ENCODE measurements at regions of chr14 and their contacts with region 1.

Region 1: GRCh38 chr14:105760691-105761346 is 234.4 kb downstream of the TMEM121 start:
- DNase-seq: peak in 1 of 2 donors; percentile 70
- H3K4me3 ChIP-seq: no peak overlapping the region
- CTCF ChIP-seq: no peak
- POLR2A ChIP-seq: no peak

Region 2: DNA sequence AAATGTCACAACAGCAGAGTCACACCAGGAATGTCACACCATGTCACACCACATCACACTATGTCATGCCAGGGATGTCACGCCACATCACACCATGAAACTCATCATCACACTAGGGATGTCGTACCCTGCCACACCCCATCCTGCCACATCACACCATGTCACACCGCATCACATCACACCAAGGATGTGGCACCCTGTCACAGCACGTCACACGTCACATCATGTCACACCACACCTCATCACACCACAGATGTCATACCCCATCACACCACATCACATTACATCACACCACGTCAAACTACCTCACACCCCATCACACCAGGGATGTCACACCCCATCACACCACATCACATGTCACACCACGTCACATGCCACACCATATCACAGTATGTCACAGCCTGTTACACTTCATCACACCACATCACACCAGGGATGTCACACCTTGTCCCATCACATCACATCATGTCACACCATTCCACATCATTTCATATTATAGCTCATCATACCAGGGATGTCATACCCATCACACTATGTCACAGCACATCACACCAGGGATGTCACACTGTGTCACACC is 143.5 kb before region 1 on chr14:
- intact Hi-C with region 1: loop called (anchors 2 kb)
- DNase-seq: no peak
- H3K4me3 ChIP-seq: no peak overlapping the region
- CTCF ChIP-seq: no peak
- POLR2A ChIP-seq: no peak

Region 3: GRCh38 chr14:105841022-105842009 is 80.5 kb after region 1 on chr14:
- intact Hi-C with region 1: no loop called
- DNase-seq: peak in 1 of 2 donors; percentile 79
- H3K4me3 ChIP-seq: no peak overlapping the region
- CTCF ChIP-seq: no peak
- POLR2A ChIP-seq: no peak

Region 4: GRCh38 chr14:106491851-106492250 is 731.0 kb after region 1 on chr14:
- intact Hi-C with region 1: no loop called
- DNase-seq: no peak
- H3K4me3 ChIP-seq: no peak overlapping the region
- CTCF ChIP-seq: no peak
- POLR2A ChIP-seq: no peak

Measured in lower leg skin (tissue), 4 donors.